Right ventricle myocardium superior (tissue), 1 donor: ENCODE measurements at regions of chr4 and their contacts with region 1.

Region 1: DNA sequence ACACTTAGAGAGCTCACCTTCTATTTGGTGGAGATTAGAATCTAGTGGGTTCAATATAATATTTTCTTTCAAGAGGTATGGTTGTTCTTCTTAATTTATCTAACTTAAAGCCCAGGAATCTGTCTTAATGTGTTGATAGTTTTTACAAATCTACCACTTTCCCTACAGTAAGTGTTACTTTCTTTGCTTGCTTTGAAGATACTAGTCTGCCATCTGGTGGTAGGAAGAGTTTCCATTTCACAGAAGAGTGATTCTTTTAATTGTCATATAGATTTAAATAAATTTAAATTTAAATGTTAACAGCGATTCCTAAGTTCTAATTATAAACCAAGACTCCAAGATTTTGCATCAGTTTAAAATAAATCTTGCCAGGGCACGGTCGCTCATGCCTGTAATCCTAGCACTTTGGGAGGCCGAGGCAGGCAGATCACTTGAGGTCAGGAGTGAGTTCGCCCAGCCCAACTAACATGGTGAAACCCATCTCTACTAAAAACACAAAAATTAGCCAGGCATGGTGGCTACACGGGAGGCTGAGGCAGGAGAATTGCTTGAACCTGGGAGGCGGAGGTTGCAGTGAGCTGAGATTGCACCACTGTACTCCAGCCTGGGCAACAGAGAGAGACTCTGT is 43.5 kb downstream of the NUDT9 start:
- DNase-seq: no peak
- ATAC-seq: peak; percentile 54

Region 2: GRCh38 chr4:87220094-87220822 is 245.6 kb before region 1 on chr4 and contains the start of gene KLHL8:
- intact Hi-C with region 1: no loop called
- DNase-seq: peak; percentile 93
- ATAC-seq: peak; percentile 99
- total RNA-seq, gene KLHL8: 12.4 TPM

Region 3: DNA sequence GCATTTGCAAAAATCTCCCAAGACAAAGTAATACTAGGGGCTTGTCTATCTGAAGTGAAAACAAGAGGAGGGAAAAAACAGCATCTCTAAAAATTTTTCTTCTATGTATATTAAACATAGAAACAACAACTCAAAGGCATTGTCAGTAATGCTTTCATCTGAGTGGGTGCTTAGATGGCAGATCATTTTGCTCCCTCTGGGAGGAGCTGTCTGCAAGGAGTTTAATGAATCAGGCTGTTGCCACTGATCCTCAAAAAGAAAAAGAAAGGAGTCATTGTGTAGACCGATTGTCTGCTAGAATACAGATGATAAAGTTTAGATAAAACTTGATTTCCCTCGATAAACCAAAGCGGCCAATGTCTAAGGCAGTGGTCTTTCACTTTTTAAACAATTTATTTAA is 195.7 kb before region 1 on chr4:
- intact Hi-C with region 1: loop called (anchors 10 kb)
- DNase-seq: no peak
- ATAC-seq: no peak

Region 4: GRCh38 chr4:87370068-87370467 is 95.8 kb before region 1 on chr4:
- intact Hi-C with region 1: loop called (anchors 5 kb)
- DNase-seq: no peak
- ATAC-seq: no peak

Region 5: DNA sequence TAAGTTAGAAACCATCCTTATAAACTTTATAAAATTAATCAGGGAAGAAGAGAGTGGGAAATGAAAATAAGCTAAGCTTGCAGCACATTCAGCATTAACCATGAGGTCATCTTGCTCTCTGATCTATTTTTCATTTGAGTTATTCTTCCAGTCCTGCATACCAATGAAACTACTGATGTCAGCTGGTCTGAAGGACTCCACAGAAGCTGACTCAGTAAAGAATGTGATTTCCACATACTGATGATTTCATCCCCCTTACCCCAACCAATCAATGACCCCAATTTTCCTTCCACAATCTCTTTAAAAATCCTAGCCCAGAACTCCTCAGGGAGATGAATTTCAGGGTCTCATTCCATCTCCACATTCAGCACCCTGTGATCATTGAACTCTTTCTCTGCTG is 123.7 kb after region 1 on chr4:
- intact Hi-C with region 1: no loop called
- DNase-seq: no peak
- ATAC-seq: peak; percentile 87